GM13976 (cell line): ENCODE measurements at regions of chr2 and their contacts with region 1.

Region 1: GRCh38 chr2:225660262-225661131 is 261.0 kb downstream of the NYAP2 start:
- DNase-seq: peak; percentile 63
- CTCF ChIP-seq: peak; percentile 59

Region 2: DNA sequence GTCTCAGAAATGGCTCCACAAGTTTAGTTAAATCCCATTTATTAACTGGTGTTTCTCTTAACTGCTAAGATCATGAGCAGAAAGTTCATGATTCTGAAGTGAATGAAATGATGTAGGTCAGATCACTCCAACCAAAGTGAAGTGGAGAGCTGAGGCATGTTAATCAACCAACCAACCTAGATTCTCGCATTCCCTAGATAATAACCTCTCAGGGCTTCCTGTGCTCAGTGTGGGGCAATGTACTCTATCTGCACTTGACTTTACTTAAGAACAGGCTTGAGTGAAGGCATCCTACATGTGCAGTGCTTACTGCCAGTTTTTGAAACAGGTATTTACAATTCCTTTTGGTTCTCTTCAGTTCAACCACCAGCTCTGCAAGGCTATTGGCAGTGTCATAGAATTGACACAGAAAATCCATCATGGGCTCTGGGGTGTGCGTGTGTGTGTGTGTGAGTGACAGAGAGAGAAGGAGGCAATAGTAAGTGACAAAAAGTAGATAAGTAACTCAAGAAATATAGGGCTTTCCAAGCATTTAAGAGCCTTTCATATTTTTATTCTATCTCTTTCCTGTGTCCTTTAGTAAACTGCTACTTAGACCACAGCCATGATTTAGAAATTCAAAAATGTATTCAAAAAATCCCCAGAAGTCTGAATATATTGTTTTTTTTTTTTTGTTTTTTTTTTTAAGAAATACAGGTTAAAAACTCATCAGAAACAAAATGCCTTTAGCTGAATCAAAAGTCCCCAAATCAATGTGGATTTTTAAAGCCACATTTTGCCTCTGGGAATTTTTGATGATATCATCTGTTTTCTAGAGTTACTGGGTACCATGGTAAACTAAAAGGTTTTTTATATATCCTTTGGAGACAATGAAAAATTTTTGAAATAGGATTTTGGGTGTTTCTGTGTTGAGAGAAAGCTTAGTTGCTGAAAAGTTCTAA is 646.8 kb before region 1 on chr2:
- in situ Hi-C with region 1: no loop called
- DNase-seq: no peak
- CTCF ChIP-seq: no peak

Region 3: DNA sequence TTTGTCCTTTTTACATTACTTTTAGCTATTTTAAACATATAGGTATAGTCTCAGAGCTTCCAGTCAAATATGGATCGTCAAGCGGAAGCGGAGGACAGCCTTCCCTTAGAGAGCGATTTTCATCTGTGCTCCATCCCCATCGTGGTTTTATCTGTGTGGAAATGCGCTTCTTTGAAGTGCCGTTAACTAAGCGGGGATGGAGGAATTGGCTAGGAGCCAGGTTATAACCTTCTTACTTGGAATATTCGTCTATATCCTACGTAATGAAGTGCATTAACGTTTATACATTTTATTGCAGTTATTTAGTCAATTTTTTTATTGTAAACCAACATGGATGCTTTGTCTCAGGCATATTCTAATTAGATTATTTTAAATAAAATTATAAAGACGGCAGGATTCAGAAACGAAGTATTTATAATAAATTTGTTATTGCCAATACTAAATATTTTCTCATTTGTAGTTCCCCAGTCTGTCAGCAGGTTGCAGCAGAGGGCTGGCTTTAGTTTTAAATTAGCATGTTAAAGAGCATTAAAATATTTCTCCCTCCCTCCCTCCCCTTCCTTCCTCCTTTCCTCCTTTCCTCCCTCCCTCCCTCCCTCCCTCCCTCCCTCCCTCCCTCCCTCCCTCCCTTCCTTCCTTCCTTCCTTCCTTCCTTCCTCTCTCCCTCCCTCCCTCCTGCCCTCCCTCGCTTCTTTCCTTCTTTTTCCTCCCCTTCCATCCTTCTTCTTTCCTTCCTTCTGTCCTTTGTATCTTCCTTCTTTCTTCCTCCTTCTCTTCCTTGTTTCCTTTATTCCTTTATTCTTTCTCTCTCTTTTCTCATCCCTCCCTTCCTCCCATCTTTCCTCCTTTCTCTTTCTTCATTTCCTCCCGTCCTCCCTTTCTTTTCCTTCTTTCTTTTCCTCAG is 537.7 kb before region 1 on chr2:
- in situ Hi-C with region 1: loop called (anchors 25 kb)
- DNase-seq: peak; percentile 12
- CTCF ChIP-seq: peak; percentile 43

Region 4: DNA sequence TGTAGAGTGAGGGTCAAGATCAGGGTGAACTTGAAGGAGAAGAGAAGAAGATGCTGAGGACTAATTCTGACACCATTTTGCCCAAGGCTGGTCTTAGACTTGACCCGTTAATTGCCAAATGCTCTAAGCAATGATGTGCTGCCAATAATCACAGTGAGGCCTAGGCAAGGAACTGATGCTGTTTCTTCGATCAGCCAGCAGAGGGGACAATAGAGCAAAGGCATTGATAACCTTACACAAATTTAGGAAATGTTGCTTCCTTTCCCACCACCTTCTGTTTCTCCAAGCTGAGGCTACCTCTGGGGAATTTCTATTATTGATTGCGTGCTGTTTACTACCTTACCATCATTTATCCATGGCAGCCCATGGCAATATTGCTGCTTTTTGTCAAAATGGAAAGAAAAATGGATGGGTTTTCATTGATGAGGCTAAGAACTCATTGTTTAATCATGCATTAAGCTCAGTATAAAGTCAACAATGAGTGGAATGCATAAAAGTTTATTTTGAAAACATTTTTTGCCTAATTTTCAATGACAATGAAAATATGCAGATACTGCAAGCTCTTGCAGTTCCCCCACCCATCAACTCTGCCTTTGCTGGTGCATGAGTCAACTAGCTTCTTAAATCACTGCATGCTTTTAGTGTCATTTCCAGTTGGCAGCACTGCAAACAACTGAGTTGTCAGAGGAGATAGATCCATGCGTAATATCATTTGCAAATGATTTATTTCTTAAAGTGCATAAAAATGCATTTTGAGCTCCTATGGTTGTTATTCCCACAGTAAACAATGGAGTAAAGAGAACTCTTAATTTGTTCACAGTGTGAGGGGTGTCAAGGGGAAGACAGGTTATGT is 377.4 kb before region 1 on chr2:
- in situ Hi-C with region 1: loop called (anchors 25 kb)
- DNase-seq: peak; percentile 22
- CTCF ChIP-seq: peak; percentile 77

Region 5: DNA sequence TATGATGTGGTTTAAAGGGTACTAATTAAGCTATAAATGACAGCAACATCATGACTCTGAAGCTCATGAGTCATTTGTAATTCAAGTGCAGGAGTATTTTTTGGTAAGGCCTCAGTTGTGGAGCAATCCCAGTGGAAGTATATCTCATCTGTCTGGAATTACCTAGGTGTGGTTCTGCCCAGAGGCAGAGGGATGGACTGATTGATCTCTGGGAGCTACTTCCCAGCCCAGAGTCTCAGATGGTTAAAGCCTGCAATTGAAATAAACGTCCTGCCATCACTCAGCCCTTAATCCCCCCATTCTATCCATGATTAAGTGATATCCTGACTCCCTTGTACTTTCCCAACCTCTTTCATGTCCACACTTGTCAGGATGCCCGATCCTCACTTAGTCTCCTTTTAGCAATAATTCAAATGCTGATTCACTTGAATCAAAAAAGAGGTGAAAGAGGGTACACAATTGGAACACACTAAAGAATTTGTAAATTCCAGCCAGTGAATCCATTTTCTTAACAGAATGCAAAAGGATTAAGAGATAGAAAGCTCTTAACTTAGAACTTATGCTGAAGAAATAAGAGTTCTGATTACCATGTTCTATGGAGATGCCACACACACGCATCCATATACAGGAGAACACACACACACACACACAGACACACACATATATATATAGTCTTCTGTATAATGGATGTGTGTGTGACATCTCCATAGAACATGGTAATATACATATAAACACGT is 403.4 kb after region 1 on chr2:
- in situ Hi-C with region 1: no loop called
- DNase-seq: no peak
- CTCF ChIP-seq: no peak

Region 6: DNA sequence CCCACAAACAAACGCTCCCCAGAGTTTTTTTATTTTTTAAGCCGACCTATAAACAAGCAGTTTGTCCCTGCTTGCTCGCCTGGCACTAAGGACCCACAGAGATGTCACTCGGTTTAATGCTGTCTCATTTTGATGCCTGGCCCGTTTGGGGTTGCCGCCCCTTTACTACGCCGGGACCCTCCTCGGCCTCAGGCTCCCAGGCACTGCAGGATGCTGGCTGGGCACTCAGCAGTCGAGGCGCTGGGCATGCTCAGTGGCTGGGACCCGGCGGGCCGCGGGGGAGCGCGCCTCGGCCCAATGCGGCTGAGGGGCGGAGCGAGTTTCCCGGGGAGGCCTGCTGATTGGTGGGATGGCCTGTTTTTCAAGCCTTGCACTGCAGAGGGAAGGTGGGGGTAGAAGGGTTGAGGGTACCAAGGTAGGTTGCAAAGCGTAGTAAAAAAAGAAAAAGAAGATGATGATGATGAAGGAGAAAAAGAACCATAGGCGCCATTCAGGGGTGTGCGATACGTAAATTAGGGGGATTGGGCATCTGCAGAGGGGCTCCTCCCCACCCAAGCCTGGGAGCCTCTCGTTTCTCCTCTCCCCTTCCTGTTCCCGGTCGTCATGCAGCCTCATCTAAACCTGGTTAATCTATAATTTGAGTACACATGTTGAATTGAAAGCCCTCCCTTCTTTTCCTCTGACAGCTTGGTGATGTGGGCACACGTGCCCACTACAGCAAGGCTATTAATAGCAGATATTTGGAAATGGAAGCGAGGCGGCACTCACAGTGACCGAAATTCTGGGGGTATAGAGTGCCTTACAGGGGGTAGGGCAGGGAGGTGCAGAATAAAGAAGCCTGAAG is 1140.7 kb after region 1 on chr2:
- in situ Hi-C with region 1: loop called (anchors 25 kb)
- DNase-seq: peak; percentile 85
- CTCF ChIP-seq: no peak